ENCODE measurements at regions of chr2 and their contacts with region 1.

Region 1: DNA sequence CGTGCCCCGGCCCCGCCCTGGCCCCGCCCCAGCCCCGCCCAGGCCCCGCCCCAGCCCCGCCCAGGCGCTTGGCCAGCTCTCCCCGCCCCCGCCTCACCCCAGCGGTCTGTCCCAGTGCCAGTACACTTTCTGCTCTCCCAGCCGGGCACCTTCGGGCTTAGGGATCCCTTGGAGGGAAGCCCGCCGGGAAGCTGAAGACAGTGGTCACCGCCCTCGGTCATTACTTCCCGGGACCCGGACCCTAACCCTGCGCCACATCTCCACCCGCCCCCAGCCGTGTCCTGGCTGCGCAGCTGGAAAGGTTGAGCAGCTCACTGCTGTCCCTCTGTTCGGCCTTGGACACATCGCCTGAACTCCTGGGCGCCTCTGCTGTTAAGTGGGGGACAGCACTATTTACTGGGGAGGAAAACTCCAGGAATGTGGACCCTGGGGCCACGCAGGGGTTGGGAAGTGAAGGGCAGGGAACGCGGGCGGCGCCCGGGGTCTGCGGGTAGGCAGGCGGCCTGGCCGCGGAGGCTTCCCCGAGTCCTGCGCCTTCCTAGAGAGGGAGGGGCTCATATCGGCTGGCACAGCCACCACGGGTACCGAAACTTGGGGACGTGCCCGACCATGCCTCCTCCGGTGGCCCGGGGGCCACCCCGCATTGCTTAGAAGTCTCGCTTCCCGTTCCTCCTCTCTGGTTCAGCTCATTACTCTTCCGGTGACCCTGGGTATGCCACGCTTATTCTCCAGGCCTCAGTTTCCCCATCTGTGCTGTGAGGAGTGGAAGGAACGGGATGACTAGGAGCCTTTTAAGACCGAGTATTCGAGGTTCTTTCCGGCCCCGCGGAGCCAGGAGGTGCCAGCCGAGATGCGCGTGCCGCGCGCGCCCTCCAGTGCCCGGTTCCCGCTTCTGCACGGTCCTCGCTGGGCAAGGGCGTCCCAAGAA is 121.0 kb downstream of the GYPC start:
- DNase-seq: peak; percentile 95
- H3K4me3 ChIP-seq: peak overlapping the region; percentile 64 to 74 (median 66)
- H3K27ac ChIP-seq: peak overlapping the region; percentile 49 to 65 (median 60)
- H3K4me1 ChIP-seq: peaks cover 0 to 12% (median 10%) of the 10 kb centered on the region in 4 donors
- H3K27me3 ChIP-seq: peaks cover 0 to 4% (median 0%) of the 10 kb centered on the region in 4 donors
- CTCF ChIP-seq: peak; percentile 85 to 93 (median 91)
- EP300 ChIP-seq: no peak
- POLR2A ChIP-seq: no peak

Region 2: GRCh38 chr2:126527836-126528507 is 249.0 kb before region 1 on chr2:
- intact Hi-C with region 1: loop called (anchors 1 kb)
- DNase-seq: peak; percentile 91
- H3K4me3 ChIP-seq: no peak overlapping the region
- H3K27ac ChIP-seq: no peak overlapping the region
- H3K4me1 ChIP-seq: no peaks in the 10 kb centered on the region
- H3K27me3 ChIP-seq: no peaks in the 10 kb centered on the region
- CTCF ChIP-seq: peak; percentile 57 to 71 (median 57)
- EP300 ChIP-seq: no peak
- POLR2A ChIP-seq: no peak

Region 3: GRCh38 chr2:126657636-126658318 is 119.2 kb before region 1 on chr2:
- intact Hi-C with region 1: loop called (anchors 10 kb)
- DNase-seq: peak; percentile 95
- H3K4me3 ChIP-seq: peak overlapping the region; percentile 69 to 90 (median 79)
- H3K27ac ChIP-seq: peak overlapping the region; percentile 94 to 99 (median 96)
- H3K4me1 ChIP-seq: peaks cover 73 to 79% (median 74%) of the 10 kb centered on the region in 4 donors
- H3K27me3 ChIP-seq: no peaks in the 10 kb centered on the region
- CTCF ChIP-seq: peak in 1 of 3 experiments; percentile 17
- EP300 ChIP-seq: peak; percentile 26
- POLR2A ChIP-seq: no peak

Region 4: DNA sequence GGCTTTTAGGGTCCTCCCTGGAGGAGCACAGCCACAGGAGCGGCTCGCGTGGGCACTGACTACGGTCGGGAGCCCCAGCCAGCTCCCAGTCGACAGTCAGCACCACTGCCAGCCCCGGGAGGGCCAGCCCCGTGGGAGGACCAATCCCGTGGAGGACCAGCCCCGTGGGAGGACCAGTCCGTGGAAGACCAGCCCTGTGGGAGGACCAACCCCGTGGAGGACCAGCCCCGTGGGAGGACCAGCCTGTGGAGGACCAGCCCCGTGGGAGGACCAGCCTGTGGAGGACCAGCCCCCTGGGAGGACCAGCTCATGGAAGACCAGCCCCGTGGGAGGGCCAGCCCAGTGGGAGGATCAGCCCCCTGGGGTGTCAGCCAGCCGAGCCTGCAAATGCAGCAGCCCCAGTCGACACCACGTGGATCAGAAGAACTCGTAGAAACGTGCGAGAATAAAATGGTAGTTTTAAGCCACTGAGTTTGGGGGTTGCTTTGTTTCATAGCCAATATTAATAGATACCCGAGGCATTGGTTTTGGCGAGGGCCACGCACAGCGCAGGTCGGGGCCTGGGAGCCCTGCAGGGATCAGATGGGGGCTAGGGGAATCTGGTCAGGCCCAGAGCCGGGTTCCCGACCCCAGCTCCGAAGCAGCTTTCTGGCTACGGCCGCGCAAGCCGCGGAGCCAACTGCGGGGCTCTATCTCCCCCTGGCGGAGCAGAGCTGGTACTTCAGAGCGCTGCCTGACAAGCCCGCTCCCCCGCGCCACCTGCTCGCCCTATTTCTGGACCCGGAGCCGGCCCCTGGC is 194.7 kb after region 1 on chr2:
- intact Hi-C with region 1: loop called (anchors 5 kb)
- DNase-seq: no peak
- H3K4me3 ChIP-seq: peak overlapping the region; percentile 49 to 63 (median 56)
- H3K27ac ChIP-seq: peak overlapping the region; percentile 60 to 68 (median 66)
- H3K4me1 ChIP-seq: peaks cover 7 to 22% (median 21%) of the 10 kb centered on the region in 4 donors
- H3K27me3 ChIP-seq: peaks cover 0 to 4% (median 0%) of the 10 kb centered on the region in 4 donors
- CTCF ChIP-seq: peak; percentile 86 to 99 (median 88)
- EP300 ChIP-seq: no peak
- POLR2A ChIP-seq: no peak